Breast epithelium (tissue), 4 donors: ENCODE measurements at regions of chr7 and their contacts with region 1.

Region 1: DNA sequence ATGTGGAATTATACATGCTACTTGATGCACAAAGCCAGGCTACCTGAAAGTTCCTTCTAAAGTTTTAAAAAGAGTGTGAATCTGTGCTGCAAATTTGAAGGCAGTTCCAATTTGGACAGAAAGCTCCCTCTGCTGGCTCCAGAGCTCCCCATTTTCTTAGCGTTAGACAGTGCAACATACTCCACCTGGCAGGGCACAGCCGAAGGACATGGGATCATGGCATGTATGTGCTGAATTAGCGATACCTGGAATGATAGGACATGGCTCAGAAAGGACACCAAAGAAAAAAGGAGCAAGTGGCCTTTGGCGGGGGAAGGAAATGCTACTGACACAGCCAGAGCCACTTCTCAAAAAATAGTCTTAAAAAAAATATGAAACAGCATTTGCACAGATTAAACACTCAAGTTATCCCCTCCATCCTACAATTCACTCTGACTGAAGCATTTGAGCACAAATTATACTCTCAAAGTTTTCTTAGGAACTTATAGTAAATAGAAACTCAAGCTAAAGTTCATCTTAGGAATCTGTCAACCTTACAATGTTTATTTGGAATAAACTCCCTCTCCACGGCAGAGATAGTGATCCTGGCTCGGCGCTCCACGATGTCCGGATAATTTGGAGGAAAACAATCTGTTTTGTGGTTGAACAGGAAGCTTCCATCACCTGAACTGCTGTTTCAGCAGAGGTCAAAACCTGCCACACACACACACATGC is 80.0 kb downstream of the C7orf25 start:
- DNase-seq: peak; percentile 37 to 65
- H3K4me3 ChIP-seq: peak overlapping the region in 1 of 3 donors; percentile 26
- H3K27ac ChIP-seq: peak overlapping the region; percentile 6 to 45
- H3K4me1 ChIP-seq: peaks cover 0 to 10% of the 10 kb centered on the region in 2 donors
- H3K27me3 ChIP-seq: no peaks in the 10 kb centered on the region
- CTCF ChIP-seq: peak in 2 of 3 donors; percentile 60 to 72
- POLR2A ChIP-seq: no peak

Region 2: DNA sequence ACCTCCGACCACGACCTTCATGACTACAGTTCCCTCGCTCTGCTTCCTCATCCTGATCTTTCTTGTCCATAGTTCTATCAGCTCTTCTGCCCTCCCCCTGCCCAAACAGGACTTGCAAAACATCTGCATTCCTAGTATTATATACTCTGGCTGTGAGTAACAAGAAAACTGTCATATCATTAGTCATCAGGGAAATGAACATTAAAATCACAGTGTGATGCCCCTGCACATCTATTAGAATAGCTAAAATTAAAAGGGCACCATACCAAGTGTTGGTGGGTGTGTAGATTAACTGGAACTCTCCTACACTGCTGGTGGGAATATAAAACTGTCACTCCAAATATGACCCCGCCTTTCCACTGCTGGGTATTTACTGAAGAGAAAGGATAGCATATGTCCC is 61.8 kb before region 1 on chr7:
- intact Hi-C with region 1: no loop called
- DNase-seq: no peak
- H3K4me3 ChIP-seq: no peak overlapping the region
- H3K27ac ChIP-seq: no peak overlapping the region
- H3K4me1 ChIP-seq: no peaks in the 10 kb centered on the region
- H3K27me3 ChIP-seq: no peaks in the 10 kb centered on the region
- CTCF ChIP-seq: no peak
- POLR2A ChIP-seq: no peak

Region 3: GRCh38 chr7:42812779-42813178 is 19.1 kb before region 1 on chr7:
- intact Hi-C with region 1: no loop called
- DNase-seq: no peak
- H3K4me3 ChIP-seq: no peak overlapping the region
- H3K27ac ChIP-seq: no peak overlapping the region
- H3K4me1 ChIP-seq: no peaks in the 10 kb centered on the region
- H3K27me3 ChIP-seq: no peaks in the 10 kb centered on the region
- CTCF ChIP-seq: no peak
- POLR2A ChIP-seq: no peak

Region 4: DNA sequence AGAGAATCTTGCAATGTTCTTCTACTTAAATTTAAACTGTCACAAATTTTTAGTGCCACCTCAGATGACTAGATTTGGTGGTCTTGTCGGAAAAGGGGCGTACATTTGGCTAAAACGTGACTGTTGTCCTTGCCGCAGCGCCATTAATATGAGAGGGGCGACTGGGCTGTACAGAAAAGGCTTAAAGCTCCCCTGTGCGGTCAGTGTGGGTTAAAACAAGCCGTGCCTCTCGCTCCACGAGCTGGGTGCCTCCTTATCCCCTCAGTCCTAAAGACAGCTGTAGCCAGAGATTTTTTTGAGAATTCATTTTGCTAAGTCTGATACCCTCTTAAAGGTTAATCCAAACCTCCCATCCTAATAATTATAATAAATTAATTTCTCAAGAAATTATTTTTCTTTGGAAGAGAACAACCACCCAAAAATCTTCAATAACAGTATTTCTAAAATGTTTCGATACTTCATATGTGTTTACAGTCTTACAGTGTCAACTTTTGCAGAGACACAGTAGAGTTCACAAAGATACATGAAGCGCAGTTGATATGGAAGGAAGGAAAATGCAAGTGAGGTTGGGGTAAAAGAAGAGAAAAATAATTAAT is 11.4 kb after region 1 on chr7:
- intact Hi-C with region 1: loop called (anchors 1 kb)
- DNase-seq: no peak
- H3K4me3 ChIP-seq: peak overlapping the region in 1 of 3 donors; percentile 13
- H3K27ac ChIP-seq: no peak overlapping the region
- H3K4me1 ChIP-seq: no peaks in the 10 kb centered on the region
- H3K27me3 ChIP-seq: no peaks in the 10 kb centered on the region
- CTCF ChIP-seq: peak in 2 of 3 donors; percentile 51 to 64
- POLR2A ChIP-seq: no peak